ENCODE measurements at regions of chr14 and their contacts with region 1.

Region 1: GRCh38 chr14:71625891-71626701 is 306.1 kb upstream of the RGS6 start:
- DNase-seq: no peak
- ATAC-seq: no peak
- H3K4me3 ChIP-seq: no peak overlapping the region
- H3K27ac ChIP-seq: no peak overlapping the region
- H3K4me1 ChIP-seq: no peaks in the 10 kb centered on the region
- H3K27me3 ChIP-seq: no peaks in the 10 kb centered on the region
- CTCF ChIP-seq: no peak

Region 2: GRCh38 chr14:71574976-71575375 is 51.1 kb before region 1 on chr14:
- intact Hi-C with region 1: loop called in 1 of 10 experiments (anchors 2 kb)
- DNase-seq: no peak
- ATAC-seq: no peak
- H3K4me3 ChIP-seq: no peak overlapping the region
- H3K27ac ChIP-seq: no peak overlapping the region
- H3K4me1 ChIP-seq: peaks cover 0 to 20% (median 0%) of the 10 kb centered on the region in 9 donors
- H3K27me3 ChIP-seq: no peaks in the 10 kb centered on the region
- CTCF ChIP-seq: no peak